ENCODE measurements at regions of chr1 and their contacts with region 1.

Region 1: DNA sequence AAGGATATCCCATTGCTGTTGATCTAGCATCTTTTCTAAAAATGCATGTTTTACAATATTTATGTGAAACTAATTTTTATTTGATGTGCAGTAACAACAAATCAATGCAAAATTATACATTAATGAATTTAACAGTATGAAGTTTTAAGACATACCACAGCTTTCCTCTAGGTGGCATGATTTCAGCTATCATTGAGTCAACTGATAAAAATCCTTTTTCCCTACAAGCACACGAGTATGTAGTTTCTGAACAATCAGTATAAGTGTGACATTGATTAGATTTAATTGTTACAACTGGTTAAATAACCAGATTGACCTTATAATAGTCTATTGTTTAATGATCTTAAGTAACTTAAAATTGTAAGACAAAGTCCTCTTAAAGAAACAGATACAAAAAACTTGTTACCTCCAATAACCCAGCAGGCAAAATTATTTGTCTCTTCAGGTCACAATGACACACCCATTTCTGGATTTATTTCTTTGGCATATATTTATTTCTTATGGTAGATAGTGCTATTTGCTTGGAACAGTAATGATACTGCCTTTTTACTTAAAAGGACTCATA is 5.8 kb upstream of the TGFB2 start:
- DNase-seq: no peak

Region 2: DNA sequence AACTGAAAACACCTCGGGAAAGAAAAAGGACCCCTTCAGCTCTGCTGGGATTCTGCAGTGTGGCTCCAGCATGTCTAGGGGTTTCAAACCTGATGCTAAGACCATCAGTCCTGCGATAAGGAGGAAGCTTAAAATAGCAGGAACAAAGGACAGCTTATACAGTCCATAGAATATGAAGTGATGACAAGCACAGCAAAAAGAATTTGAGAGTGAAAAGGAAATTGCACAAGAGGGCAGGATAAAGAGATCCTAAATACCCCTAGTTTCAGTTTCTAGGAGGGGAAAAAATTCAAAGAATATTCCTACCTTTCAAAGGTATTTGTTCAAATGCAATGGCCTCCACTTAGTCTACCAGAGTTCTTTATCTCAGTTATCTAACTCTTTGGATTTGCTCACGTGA is 177.2 kb after region 1 on chr1:
- intact Hi-C with region 1: loop called (anchors 5 kb)
- DNase-seq: no peak

Region 3: DNA sequence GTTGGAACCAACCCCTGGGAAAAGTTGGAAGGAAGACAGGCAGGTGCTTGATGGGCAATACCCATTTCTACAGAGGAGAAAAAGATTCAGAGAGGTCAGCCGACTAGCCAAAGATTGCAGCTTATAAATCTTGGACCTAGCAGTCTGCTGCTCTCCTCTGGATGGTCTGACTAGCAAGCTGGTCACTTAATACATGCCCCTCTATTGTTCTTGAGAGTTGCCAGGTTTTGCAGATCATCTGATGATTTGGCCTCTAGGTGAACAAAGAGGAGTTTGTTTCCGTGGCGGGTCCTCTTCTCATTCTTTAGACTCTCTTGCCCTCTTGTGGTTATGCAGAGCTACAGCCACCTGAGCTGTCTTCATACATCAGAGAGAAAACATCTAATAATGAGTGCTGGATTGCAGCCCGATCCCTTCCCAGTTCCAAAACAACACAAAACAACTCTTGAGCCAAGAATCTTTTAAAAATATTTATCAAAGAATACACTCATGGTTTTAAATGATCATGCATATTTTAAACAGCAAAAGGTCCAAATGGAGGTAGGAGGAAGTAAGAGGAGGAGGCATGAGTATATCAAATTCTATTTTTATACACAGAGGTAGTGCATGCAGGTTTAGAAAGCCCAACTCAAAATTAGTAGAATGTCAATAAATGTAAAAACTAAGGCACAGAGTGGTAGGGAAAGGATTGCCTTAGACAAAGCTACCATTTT is 1473.3 kb after region 1 on chr1:
- intact Hi-C with region 1: loop called (anchors 2 kb)
- DNase-seq: peak in 5 of 10 donors; percentile 9 to 51 (median 32)